ENCODE measurements at regions of chr4 and their contacts with region 1.

Region 1: DNA sequence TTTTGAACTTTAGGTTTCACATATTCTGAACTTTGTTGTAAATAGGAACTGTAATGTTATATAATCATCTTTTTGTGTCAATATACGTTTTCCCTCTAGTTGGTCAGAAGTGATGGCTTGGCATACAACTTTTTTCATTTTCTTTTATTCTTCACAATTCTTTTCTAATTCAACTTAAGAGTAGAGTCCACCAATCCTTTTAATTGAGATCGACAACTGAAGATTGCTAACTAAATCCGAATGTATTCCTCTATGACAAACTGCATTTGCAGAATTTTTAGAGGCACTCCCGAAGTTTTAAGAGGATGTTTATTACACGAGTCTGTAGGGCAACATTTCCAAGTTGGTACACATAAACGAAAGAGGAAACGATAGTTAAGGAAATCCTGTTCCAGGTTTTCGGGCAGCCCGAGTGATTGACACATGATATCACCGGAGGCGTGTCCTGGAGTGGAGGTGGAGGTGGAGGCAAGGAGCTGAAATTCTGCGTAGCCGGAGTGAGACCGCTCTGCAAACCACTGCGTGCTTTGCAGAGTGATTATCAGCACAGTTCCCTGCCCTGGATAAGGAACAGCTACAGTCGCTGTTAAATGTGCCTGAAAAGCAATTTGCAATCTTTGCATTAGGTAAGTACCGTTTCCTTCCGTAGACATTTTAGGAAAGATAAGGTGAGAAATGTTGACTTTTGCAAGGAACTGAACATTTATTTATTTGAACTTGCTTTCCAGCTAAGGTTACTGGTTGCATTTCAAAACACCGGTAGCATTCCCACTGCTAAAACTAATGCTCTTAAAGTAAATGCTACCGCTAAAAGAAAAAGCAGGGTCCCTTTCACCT is at the start of gene SPRY1:
- DNase-seq: peak; percentile 95
- ATAC-seq: peak; percentile 84
- H3K4me3 ChIP-seq: peak within 1 kb of the TSS; percentile 83 to 96 (median 90)
- H3K27ac ChIP-seq: peak within 1 kb of the TSS; percentile 90
- H3K4me1 ChIP-seq: peaks cover 16% of the 10 kb centered on the region
- H3K27me3 ChIP-seq: no peaks in the 10 kb centered on the region; a peak in 1 of 5 replicates
- CTCF ChIP-seq: no peak; the same call in 1 of the 2 replicates
- EP300 ChIP-seq: 0 out of 4 replicates have a peak, but pooled peaks of 1 of the 2 experiments have one; percentile 16
- POLR2A ChIP-seq: peak; percentile 92 to 94
- RAD21 ChIP-seq: no peak; the same call in 1 of the 2 replicates
- total RNA-seq, gene SPRY1: 22.5 and 24.7 TPM in 2 replicates

Region 2: DNA sequence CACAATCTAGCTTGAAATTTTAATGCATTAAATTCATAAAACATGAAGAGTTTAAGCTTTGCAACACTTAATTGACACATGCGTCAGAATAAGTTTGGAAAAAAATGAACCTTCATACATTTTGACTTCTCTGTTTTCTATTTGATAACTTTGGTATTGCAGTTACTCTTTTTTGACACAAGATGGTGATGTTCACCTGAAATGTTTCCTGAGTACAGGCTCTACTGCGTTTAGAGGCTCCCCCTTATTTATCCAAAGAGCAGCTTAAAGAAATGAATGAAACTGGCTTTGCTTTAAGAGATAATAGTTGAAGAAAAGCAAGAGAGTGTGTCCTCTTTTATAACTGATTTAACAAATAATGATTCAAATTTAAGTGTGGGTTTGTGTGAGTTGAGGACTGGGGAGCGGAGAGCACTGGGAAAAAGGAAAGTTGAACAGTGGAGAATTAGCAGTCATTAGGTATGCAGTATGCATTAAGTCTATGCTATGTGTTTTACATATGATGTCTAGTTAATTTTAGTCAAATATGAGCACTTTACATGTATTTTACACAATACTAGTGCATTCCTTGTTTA is 293.5 kb before region 1 on chr4:
- CTCF ChIA-PET with region 1: no interaction called
- POLR2A ChIA-PET with region 1: no interaction called
- in situ Hi-C with region 1: loop called (anchors 10 kb)
- intact Hi-C with region 1: loop called (anchors 1 kb)
- DNase-seq: peak; percentile 49
- ATAC-seq: peak; percentile 77
- H3K4me3 ChIP-seq: no peak overlapping the region
- H3K27ac ChIP-seq: no peak overlapping the region
- H3K4me1 ChIP-seq: no peaks in the 10 kb centered on the region
- H3K27me3 ChIP-seq: no peaks in the 10 kb centered on the region
- CTCF ChIP-seq: peak; percentile 69
- EP300 ChIP-seq: no peak
- POLR2A ChIP-seq: no peak
- RAD21 ChIP-seq: peak; percentile 69; the same call in 1 of the 2 replicates

Region 3: DNA sequence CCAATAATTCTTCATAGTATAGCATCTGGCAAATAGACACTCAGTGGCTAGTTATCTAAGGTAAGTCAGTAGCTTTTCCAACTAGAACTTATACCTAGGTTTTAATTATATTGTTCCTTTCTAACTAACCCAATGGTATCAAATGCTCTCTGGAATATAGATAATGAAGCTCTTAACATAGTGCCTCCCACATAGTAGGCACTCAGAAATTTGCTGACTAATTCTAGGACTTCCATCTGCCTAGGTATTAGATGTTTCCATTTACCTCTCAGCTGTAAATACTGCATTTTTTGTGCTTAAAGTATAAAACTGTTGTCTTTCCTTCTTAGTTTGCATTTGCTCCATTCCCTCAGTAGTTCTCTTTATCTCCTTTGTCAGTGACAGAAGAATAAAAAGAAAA is 214.2 kb before region 1 on chr4:
- CTCF ChIA-PET with region 1: no interaction called
- POLR2A ChIA-PET with region 1: no interaction called
- in situ Hi-C with region 1: no loop called
- intact Hi-C with region 1: no loop called
- DNase-seq: no peak
- ATAC-seq: no peak
- H3K4me3 ChIP-seq: no peak overlapping the region
- H3K27ac ChIP-seq: no peak overlapping the region
- H3K4me1 ChIP-seq: no peaks in the 10 kb centered on the region
- H3K27me3 ChIP-seq: no peaks in the 10 kb centered on the region
- CTCF ChIP-seq: no peak
- EP300 ChIP-seq: no peak
- POLR2A ChIP-seq: no peak
- RAD21 ChIP-seq: no peak

Region 4: GRCh38 chr4:123363729-123364128 is 32.8 kb before region 1 on chr4:
- CTCF ChIA-PET with region 1: no interaction called
- POLR2A ChIA-PET with region 1: no interaction called
- in situ Hi-C with region 1: no loop called
- intact Hi-C with region 1: no loop called
- DNase-seq: no peak
- ATAC-seq: no peak
- H3K4me3 ChIP-seq: no peak overlapping the region
- H3K27ac ChIP-seq: no peak overlapping the region
- H3K4me1 ChIP-seq: peaks cover 19% of the 10 kb centered on the region
- H3K27me3 ChIP-seq: no peaks in the 10 kb centered on the region
- CTCF ChIP-seq: no peak
- EP300 ChIP-seq: no peak
- POLR2A ChIP-seq: no peak
- RAD21 ChIP-seq: no peak

Region 5: GRCh38 chr4:123412091-123412505 is 15.6 kb after region 1 on chr4:
- CTCF ChIA-PET with region 1: no interaction called
- POLR2A ChIA-PET with region 1: interaction called, 15 read pairs
- in situ Hi-C with region 1: no loop called
- intact Hi-C with region 1: no loop called
- DNase-seq: no peak
- ATAC-seq: no peak
- H3K4me3 ChIP-seq: no peak overlapping the region
- H3K27ac ChIP-seq: peak overlapping the region; percentile 77
- H3K4me1 ChIP-seq: peaks cover 98% of the 10 kb centered on the region
- H3K27me3 ChIP-seq: no peaks in the 10 kb centered on the region
- CTCF ChIP-seq: no peak
- EP300 ChIP-seq: peak in 1 of 2 experiments; percentile 52; a peak in 1 of 4 replicates
- POLR2A ChIP-seq: no peak
- RAD21 ChIP-seq: no peak

Region 6: DNA sequence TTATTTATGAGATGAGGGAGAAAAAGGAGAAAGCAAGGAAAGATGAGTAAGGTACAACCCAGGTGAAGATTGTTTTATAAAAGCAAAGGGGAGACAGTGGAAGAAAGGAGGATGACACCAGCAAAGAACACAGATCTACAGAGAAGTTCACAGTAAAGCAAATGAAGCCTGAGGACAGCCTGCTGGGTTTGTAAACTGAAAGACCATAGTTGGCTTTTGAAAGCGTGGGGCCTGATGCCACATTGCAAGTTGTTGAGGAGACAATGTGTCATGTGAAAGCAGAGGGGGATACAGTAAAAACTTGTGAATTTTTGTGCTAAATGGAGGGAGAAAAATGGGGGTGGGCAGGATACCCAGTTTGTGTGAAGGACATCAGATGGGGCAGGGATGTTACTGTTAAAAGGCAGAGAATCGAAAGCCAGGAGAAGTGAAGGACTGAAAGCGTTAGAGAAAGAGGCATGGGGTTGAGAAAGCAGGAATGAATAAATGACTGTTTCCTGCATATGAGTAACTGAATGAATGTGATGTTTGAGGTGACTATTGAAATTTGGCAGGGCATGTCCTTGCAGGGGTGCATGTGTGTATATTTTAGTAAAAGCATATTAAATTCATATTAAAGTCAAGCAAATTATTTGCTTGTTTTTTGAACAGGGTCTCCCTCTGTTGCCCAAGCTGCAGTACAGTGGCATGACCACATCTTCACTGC is 69.7 kb after region 1 on chr4:
- CTCF ChIA-PET with region 1: no interaction called
- POLR2A ChIA-PET with region 1: no interaction called
- in situ Hi-C with region 1: no loop called
- intact Hi-C with region 1: no loop called
- DNase-seq: no peak
- ATAC-seq: no peak
- H3K4me3 ChIP-seq: no peak overlapping the region
- H3K27ac ChIP-seq: no peak overlapping the region
- H3K4me1 ChIP-seq: 0 out of 2 replicates have a peak, but pooled peaks cover 4% of the 10 kb centered on the region
- H3K27me3 ChIP-seq: no peaks in the 10 kb centered on the region
- CTCF ChIP-seq: no peak
- EP300 ChIP-seq: no peak
- POLR2A ChIP-seq: no peak
- RAD21 ChIP-seq: no peak

Region 7: DNA sequence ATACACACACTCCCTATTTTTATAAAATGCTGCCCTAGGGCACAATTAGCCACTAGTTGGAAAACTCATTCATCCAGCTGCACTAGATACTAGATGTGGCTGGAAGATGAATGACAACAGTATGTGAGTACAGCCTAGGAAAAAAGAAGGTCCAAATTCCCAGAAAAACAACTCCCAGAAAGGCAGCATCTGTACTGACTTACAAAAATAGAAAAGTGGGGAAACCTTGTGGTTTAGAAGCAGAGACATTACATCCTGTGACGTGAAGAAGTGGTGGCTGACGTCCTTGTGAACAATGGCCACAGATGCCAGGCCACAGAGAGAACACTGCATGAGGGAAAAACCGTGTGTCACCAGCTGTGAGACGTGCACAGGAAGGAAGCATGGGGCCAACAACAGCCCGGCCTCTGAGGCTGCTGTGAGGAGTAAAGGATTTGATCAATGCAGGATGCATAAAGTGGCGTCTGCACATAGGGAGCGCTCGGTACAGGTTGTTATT is 81.2 kb after region 1 on chr4:
- CTCF ChIA-PET with region 1: no interaction called
- POLR2A ChIA-PET with region 1: interaction called, 33 read pairs
- in situ Hi-C with region 1: loop called (anchors 5 kb)
- intact Hi-C with region 1: loop called (anchors 1 kb)
- DNase-seq: peak; percentile 41
- ATAC-seq: peak; percentile 44
- H3K4me3 ChIP-seq: peak overlapping the region in 2 of 3 experiments; percentile 11 to 29; a peak in 2 of 6 replicates
- H3K27ac ChIP-seq: peak overlapping the region; percentile 89
- H3K4me1 ChIP-seq: peaks cover 67% of the 10 kb centered on the region
- H3K27me3 ChIP-seq: no peaks in the 10 kb centered on the region
- CTCF ChIP-seq: 0 out of 2 replicates have a peak, but pooled peaks have one; percentile 10
- EP300 ChIP-seq: no peak
- POLR2A ChIP-seq: 0 out of 4 replicates have a peak, but pooled peaks of 1 of the 2 experiments have one; percentile 25
- RAD21 ChIP-seq: no peak

Region 8: GRCh38 chr4:123564758-123565346 is 168.3 kb after region 1 on chr4:
- CTCF ChIA-PET with region 1: interaction called, 10 read pairs
- POLR2A ChIA-PET with region 1: interaction called, 4 read pairs
- in situ Hi-C with region 1: loop called (anchors 5 kb)
- intact Hi-C with region 1: loop called (anchors 1 kb)
- DNase-seq: peak; percentile 92
- ATAC-seq: peak; percentile 100
- H3K4me3 ChIP-seq: no peak overlapping the region
- H3K27ac ChIP-seq: no peak overlapping the region
- H3K4me1 ChIP-seq: peaks cover 35% of the 10 kb centered on the region
- H3K27me3 ChIP-seq: no peaks in the 10 kb centered on the region
- CTCF ChIP-seq: peak; percentile 92
- EP300 ChIP-seq: peak in 1 of 2 experiments; percentile 63; a peak in 2 of 4 replicates
- POLR2A ChIP-seq: no peak
- RAD21 ChIP-seq: peak; percentile 89

Region 9: DNA sequence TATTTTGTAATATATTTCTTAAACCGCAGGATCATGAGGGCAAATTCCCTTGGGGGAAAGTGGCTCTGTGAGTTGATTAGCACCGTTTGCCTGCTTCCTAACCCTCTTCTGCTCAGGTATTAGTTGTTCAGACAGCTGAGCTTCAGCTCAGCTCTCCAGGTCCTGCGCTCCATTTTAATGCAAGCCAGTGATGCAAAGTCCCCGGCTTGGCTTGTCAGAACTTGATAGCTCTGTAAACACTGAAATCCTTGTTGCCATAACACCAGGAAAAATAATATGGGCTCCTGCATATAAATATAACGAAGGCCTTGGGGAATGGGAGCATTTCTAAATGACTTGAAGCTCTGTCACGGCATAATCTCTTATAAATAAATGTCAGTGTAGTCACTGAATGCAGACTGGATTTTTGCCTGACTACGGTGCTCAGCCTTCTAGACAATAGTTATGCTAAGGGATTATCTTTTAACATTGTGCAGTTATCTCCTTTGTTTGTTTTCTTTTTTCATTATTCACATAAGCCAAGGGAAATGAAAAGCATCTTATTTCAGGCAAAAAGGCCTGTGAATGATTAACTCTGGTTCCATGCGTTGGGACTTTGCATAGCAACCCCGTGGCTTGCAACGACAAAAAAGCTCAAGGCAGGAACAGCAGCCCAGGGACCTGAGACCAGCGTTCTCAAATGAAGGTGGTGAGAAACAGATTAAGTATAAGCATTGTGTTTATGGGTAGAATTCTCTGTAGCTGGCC is 253.3 kb after region 1 on chr4:
- CTCF ChIA-PET with region 1: no interaction called
- POLR2A ChIA-PET with region 1: interaction called, 13 read pairs
- in situ Hi-C with region 1: no loop called
- intact Hi-C with region 1: no loop called
- DNase-seq: peak; percentile 92
- ATAC-seq: peak; percentile 97
- H3K4me3 ChIP-seq: peak overlapping the region; percentile 23 to 60 (median 47); a peak in 4 of 6 replicates
- H3K27ac ChIP-seq: peak overlapping the region; percentile 92
- H3K4me1 ChIP-seq: peaks cover 60% of the 10 kb centered on the region
- H3K27me3 ChIP-seq: no peaks in the 10 kb centered on the region
- CTCF ChIP-seq: no peak
- EP300 ChIP-seq: peak; percentile 58 to 73
- POLR2A ChIP-seq: peak; percentile 45 to 92; a peak in 3 of 4 replicates
- RAD21 ChIP-seq: no peak

Region 10: GRCh38 chr4:123699880-123700771 is 303.6 kb after region 1 on chr4:
- CTCF ChIA-PET with region 1: no interaction called
- POLR2A ChIA-PET with region 1: no interaction called
- in situ Hi-C with region 1: no loop called
- intact Hi-C with region 1: no loop called
- DNase-seq: peak; percentile 31
- ATAC-seq: no peak
- H3K4me3 ChIP-seq: no peak overlapping the region
- H3K27ac ChIP-seq: no peak overlapping the region
- H3K4me1 ChIP-seq: no peaks in the 10 kb centered on the region
- H3K27me3 ChIP-seq: no peaks in the 10 kb centered on the region
- CTCF ChIP-seq: no peak
- EP300 ChIP-seq: no peak
- POLR2A ChIP-seq: no peak
- RAD21 ChIP-seq: no peak

Region 11: GRCh38 chr4:124262211-124263179 is 866.0 kb after region 1 on chr4:
- CTCF ChIA-PET with region 1: no interaction called
- POLR2A ChIA-PET with region 1: no interaction called
- in situ Hi-C with region 1: loop called (anchors 25 kb)
- intact Hi-C with region 1: no loop called
- DNase-seq: peak; percentile 53
- ATAC-seq: peak; percentile 91
- H3K4me3 ChIP-seq: no peak overlapping the region
- H3K27ac ChIP-seq: no peak overlapping the region
- H3K4me1 ChIP-seq: no peaks in the 10 kb centered on the region
- H3K27me3 ChIP-seq: no peaks in the 10 kb centered on the region
- CTCF ChIP-seq: peak; percentile 79
- EP300 ChIP-seq: no peak
- POLR2A ChIP-seq: no peak
- RAD21 ChIP-seq: peak; percentile 59